A549 (cell line): ENCODE measurements at regions of chr19 and their contacts with region 1.

Region 1: DNA sequence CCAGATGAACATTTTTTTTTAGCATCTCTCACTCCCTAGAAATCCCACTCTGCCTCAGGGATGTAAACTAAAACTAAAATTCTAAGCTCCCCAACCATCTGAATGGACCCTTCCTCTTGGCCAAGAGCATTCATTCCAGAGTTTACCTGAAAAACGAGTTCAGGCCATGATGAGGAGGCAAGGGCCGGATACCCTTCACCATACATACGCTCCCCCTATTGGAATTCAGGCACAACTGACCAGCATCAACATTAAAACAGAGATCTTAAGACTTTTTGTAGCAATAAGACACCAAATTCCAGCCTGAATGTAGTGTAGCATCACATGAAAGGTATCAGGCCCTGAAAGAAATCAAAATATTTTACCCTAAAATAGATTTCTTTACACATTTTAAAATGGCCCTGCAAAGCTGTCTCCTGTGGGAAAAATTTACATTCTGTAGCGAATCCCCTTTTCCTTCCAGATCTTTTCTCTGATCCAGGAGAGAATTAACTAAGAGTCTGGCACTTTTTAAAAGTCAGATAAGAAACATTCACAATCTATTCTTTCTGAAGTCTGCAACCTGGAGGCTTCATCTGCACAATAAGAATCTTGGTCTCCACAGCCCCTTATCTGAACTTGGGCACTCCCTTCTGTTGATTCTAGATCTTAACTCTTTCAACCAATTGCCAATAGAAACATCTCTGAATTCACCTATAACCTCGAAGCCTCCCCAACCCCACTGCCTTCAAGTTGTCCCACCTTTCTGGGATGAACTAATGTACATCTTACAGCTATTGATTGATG is 888.5 kb downstream of the UQCRFS1 start:
- DNase-seq: no peak
- ATAC-seq: no peak
- H3K4me3 ChIP-seq: no peak overlapping the region
- H3K27ac ChIP-seq: no peak overlapping the region
- H3K4me1 ChIP-seq: no peaks in the 10 kb centered on the region
- CTCF ChIP-seq: no peak
- EP300 ChIP-seq: no peak
- POLR2A ChIP-seq: no peak
- RAD21 ChIP-seq: no peak

Region 2: GRCh38 chr19:27966390-27966816 is 358.1 kb before region 1 on chr19:
- CTCF ChIA-PET with region 1: interaction called, 48 read pairs
- POLR2A ChIA-PET with region 1: no interaction called
- DNase-seq: peak in 1 of 2 experiments; percentile 31
- ATAC-seq: no peak
- H3K4me3 ChIP-seq: no peak overlapping the region
- H3K27ac ChIP-seq: no peak overlapping the region
- H3K4me1 ChIP-seq: no peaks in the 10 kb centered on the region
- CTCF ChIP-seq: peak; percentile 73
- EP300 ChIP-seq: no peak
- POLR2A ChIP-seq: no peak
- RAD21 ChIP-seq: peak; percentile 58 to 62; a peak in 4 of 5 replicates

Region 3: GRCh38 chr19:27974082-27974513 is 350.4 kb before region 1 on chr19:
- CTCF ChIA-PET with region 1: interaction called, 48 read pairs
- POLR2A ChIA-PET with region 1: no interaction called
- DNase-seq: peak; percentile 10 to 44
- ATAC-seq: peak; percentile 56 to 80; a peak in 4 of 6 replicates
- H3K4me3 ChIP-seq: no peak overlapping the region
- H3K27ac ChIP-seq: no peak overlapping the region
- H3K4me1 ChIP-seq: no peaks in the 10 kb centered on the region
- CTCF ChIP-seq: peak; percentile 45
- EP300 ChIP-seq: no peak
- POLR2A ChIP-seq: no peak
- RAD21 ChIP-seq: peak; percentile 68 to 77

Region 4: GRCh38 chr19:28406966-28407365 is 82.5 kb after region 1 on chr19:
- CTCF ChIA-PET with region 1: no interaction called
- POLR2A ChIA-PET with region 1: no interaction called
- DNase-seq: no peak
- ATAC-seq: no peak
- H3K4me3 ChIP-seq: no peak overlapping the region
- H3K27ac ChIP-seq: no peak overlapping the region
- H3K4me1 ChIP-seq: no peaks in the 10 kb centered on the region
- CTCF ChIP-seq: no peak
- EP300 ChIP-seq: no peak
- POLR2A ChIP-seq: no peak
- RAD21 ChIP-seq: no peak